CD8-positive, alpha-beta T cell (primary cell): ENCODE measurements at regions of chr10 and their contacts with region 1.

Region 1: GRCh38 chr10:104650072-104650471 is 9.0 kb downstream of the SORCS3 start:
- DNase-seq: no peak
- ATAC-seq: no peak
- H3K4me3 ChIP-seq: no peak overlapping the region
- H3K4me3 Mint-ChIP-seq: no peak overlapping the region
- H3K27ac ChIP-seq: no peak overlapping the region
- H3K27ac Mint-ChIP-seq: no peak overlapping the region
- H3K4me1 ChIP-seq: no peaks in the 10 kb centered on the region
- H3K4me1 Mint-ChIP-seq: no peaks in the 10 kb centered on the region
- H3K27me3 ChIP-seq: no peaks in the 10 kb centered on the region
- H3K27me3 Mint-ChIP-seq: peaks cover 41% of the 10 kb centered on the region
- CTCF ChIP-seq: no peak

Region 2: DNA sequence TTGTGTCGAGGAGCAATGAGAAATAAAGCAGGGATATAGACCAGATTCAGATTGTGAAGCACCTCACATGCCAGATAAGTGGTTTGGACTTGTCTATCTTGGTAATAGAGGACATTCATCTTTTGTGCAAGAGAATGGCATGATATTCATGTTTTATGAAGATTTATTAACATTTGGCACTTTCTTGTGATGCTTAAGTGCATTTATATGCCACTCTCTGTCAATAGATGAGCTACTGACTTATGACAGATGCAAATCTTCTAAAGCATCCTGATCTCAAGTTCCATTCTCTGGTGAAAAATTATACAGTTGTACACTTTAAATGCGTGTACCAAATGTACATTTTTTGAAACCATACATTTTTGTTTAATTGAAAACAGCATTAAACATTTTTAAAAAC is 406.3 kb after region 1 on chr10:
- CTCF ChIA-PET with region 1: no interaction called
- POLR2A ChIA-PET with region 1: no interaction called
- intact Hi-C with region 1: no loop called
- DNase-seq: no peak
- ATAC-seq: no peak
- H3K4me3 ChIP-seq: no peak overlapping the region
- H3K4me3 Mint-ChIP-seq: no peak overlapping the region
- H3K27ac ChIP-seq: no peak overlapping the region
- H3K27ac Mint-ChIP-seq: no peak overlapping the region
- H3K4me1 ChIP-seq: no peaks in the 10 kb centered on the region
- H3K4me1 Mint-ChIP-seq: no peaks in the 10 kb centered on the region
- H3K27me3 ChIP-seq: no peaks in the 10 kb centered on the region
- H3K27me3 Mint-ChIP-seq: no peaks in the 10 kb centered on the region
- CTCF ChIP-seq: no peak

Region 3: GRCh38 chr10:105468759-105469158 is 818.7 kb after region 1 on chr10:
- CTCF ChIA-PET with region 1: no interaction called
- POLR2A ChIA-PET with region 1: no interaction called
- intact Hi-C with region 1: no loop called
- DNase-seq: no peak
- ATAC-seq: no peak
- H3K4me3 ChIP-seq: no peak overlapping the region
- H3K4me3 Mint-ChIP-seq: no peak overlapping the region
- H3K27ac ChIP-seq: no peak overlapping the region
- H3K27ac Mint-ChIP-seq: no peak overlapping the region
- H3K4me1 ChIP-seq: no peaks in the 10 kb centered on the region
- H3K4me1 Mint-ChIP-seq: no peaks in the 10 kb centered on the region
- H3K27me3 ChIP-seq: no peaks in the 10 kb centered on the region
- H3K27me3 Mint-ChIP-seq: no peaks in the 10 kb centered on the region
- CTCF ChIP-seq: no peak

Region 4: GRCh38 chr10:105864854-105865253 is 1214.8 kb after region 1 on chr10:
- CTCF ChIA-PET with region 1: no interaction called
- POLR2A ChIA-PET with region 1: no interaction called
- intact Hi-C with region 1: loop called in 1 of 2 experiments (anchors 5 kb)
- DNase-seq: no peak
- ATAC-seq: no peak
- H3K4me3 ChIP-seq: no peak overlapping the region
- H3K4me3 Mint-ChIP-seq: no peak overlapping the region
- H3K27ac ChIP-seq: no peak overlapping the region
- H3K27ac Mint-ChIP-seq: no peak overlapping the region
- H3K4me1 ChIP-seq: no peaks in the 10 kb centered on the region
- H3K4me1 Mint-ChIP-seq: no peaks in the 10 kb centered on the region
- H3K27me3 ChIP-seq: no peaks in the 10 kb centered on the region
- H3K27me3 Mint-ChIP-seq: no peaks in the 10 kb centered on the region
- CTCF ChIP-seq: no peak